ENCODE measurements at regions of chr15 and their contacts with region 1.

Region 1: DNA sequence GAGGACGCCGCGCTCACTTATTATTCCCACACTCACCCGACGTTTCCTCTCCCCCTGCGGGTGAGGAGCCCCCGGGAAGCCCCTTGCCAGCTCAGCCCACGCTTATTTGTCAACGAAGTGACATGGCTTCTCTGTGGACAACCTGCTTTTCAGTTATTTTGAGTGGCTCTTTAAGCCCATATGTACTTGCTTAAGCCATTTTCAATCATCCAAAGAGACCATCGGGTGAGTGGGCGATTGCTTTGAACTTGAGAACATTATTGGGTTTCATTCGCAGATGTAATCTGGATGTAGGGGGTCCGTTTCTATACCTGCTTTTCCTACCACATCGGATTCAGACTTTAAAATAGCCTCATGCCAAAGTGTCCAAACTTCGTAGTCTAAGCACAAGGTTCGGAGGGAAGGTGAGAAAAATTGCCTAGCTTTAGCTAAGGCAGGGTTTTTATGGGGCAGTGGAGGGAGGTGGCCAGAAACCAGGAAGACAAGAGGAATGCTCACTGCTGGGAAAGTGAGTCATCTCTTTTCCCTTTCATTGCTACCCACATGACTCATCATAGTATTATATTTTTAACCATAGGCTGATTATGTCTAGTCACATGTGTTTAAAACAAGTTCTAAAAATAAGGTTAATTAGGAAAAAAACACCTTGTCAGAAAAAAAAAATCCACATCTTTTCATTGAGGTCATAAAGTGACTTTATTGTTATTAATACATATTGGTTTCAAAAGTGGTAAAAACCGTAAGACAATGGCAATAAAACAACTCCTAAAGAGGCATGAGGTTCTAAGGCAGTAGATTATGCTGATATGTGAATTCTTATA is 773.1 kb upstream of the NR2F2 start:
- DNase-seq: no peak
- H3K4me3 Mint-ChIP-seq: no peak overlapping the region
- H3K27ac Mint-ChIP-seq: no peak overlapping the region
- H3K4me1 Mint-ChIP-seq: peaks cover 14% of the 10 kb centered on the region
- H3K27me3 Mint-ChIP-seq: no peaks in the 10 kb centered on the region

Region 2: DNA sequence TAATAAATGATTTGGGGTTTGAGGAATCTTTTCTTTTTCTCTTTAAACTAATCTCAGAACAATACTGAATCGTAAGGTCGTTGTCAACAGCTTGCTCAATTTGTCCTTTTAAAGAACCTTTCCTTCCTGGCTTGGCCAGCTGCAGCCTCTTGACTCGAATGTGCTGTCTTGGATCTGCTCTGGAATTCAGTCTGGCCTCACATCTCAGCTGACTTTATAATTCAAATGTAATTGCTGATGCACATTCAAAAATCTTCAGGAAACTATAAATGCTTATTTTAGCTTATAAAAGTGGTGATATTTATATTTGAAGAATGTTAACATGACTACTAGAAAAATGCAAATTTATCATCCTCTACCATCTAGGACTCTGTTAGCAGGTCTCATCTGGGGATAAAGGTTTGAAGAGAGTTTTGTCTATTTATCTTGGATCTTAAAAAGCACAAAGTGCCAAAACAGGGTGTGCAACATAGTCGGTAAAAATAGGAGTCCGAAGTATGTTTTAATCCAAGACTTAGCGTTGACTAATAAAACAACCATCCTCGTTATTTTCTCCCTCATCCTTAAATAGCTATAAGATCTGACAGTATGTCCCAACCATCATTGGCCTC is 290.9 kb before region 1 on chr15:
- intact Hi-C with region 1: no loop called
- DNase-seq: no peak
- H3K4me3 Mint-ChIP-seq: no peak overlapping the region
- H3K27ac Mint-ChIP-seq: no peak overlapping the region
- H3K4me1 Mint-ChIP-seq: peaks cover 29% of the 10 kb centered on the region
- H3K27me3 Mint-ChIP-seq: peaks cover 26% of the 10 kb centered on the region

Region 3: DNA sequence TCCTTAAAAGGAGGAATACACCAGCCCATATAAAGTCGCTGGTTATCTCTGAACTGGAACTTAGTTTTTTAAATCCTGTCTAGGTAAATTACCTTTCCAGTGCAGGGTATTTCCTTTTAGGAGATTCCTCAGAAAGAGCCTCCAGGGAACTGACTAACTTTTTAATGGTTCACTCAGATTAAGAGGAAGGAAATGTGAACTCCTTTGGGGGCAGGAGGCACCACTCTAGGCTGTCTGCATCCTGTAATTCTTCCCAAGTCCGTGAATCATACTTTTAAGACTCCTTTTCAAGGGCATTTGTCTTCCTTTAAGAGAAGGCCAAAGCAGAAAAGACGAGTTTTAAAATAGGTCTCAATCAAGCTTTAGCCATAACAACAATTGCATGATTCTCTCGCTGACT is 98.2 kb before region 1 on chr15:
- intact Hi-C with region 1: no loop called
- DNase-seq: no peak
- H3K4me3 Mint-ChIP-seq: no peak overlapping the region
- H3K27ac Mint-ChIP-seq: no peak overlapping the region
- H3K4me1 Mint-ChIP-seq: peaks cover 23% of the 10 kb centered on the region
- H3K27me3 Mint-ChIP-seq: peaks cover 10% of the 10 kb centered on the region

Region 4: DNA sequence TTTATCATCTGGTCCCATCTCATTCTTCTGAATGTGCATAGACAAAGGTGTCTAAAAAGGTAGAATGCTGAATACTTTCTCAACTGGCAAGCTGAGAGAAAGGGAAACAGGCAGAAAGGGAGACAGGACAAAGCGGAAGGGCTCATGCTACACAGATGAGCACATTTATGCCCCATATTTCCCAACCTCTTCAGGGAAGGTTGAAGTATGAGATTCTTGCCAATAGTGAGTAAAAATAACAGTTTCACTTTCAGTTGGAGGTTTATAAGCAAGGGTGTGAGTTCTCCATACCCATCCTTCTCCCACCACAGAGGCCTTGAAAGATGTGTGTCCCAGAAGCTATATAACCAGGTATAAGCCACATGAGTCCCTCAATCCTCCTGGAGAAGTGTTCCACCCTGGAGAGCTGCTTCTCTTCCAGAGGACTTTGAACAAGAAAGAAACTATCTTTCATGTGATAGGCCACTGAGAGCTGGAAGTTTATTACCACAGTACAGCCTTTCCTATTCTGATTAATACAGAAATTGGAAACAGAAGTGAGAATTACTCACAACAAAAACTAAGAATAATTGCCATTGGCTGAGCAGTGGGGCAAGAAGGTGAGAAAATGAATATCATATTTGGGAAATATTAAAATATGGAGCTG is 63.6 kb after region 1 on chr15:
- intact Hi-C with region 1: loop called (anchors 1 kb)
- DNase-seq: no peak
- H3K4me3 Mint-ChIP-seq: peak overlapping the region; percentile 8
- H3K27ac Mint-ChIP-seq: peak overlapping the region; percentile 70
- H3K4me1 Mint-ChIP-seq: peaks cover 12% of the 10 kb centered on the region
- H3K27me3 Mint-ChIP-seq: no peaks in the 10 kb centered on the region

Region 5: DNA sequence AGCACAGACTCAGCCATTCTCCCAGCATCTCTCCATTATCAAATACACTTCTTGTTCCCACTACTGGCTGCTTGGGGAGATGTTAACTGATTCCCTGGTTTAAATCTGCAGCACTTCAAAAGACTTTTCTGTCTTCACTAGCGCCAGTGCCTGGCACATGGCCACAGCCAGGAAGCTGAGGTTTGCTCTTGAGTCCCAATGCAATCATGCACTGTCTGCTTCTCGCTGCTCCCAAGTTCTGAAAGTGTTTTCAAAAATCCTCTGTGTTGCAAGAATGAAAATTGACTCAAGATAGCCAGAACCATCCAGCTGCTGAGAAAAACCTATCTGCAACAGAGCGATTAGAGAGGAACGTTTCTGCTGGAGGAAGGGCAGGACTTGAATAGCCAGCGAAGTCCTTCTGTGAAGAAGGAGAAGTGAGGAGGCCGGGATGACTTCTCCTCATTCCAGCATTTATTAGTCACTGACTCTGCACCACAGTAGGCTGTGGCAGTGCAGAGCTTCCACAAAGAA is 414.7 kb after region 1 on chr15:
- intact Hi-C with region 1: no loop called
- DNase-seq: no peak
- H3K4me3 Mint-ChIP-seq: no peak overlapping the region
- H3K27ac Mint-ChIP-seq: no peak overlapping the region
- H3K4me1 Mint-ChIP-seq: no peaks in the 10 kb centered on the region
- H3K27me3 Mint-ChIP-seq: peaks cover 3% of the 10 kb centered on the region